ENCODE measurements at regions of chr12 and their contacts with region 1.

Region 1: DNA sequence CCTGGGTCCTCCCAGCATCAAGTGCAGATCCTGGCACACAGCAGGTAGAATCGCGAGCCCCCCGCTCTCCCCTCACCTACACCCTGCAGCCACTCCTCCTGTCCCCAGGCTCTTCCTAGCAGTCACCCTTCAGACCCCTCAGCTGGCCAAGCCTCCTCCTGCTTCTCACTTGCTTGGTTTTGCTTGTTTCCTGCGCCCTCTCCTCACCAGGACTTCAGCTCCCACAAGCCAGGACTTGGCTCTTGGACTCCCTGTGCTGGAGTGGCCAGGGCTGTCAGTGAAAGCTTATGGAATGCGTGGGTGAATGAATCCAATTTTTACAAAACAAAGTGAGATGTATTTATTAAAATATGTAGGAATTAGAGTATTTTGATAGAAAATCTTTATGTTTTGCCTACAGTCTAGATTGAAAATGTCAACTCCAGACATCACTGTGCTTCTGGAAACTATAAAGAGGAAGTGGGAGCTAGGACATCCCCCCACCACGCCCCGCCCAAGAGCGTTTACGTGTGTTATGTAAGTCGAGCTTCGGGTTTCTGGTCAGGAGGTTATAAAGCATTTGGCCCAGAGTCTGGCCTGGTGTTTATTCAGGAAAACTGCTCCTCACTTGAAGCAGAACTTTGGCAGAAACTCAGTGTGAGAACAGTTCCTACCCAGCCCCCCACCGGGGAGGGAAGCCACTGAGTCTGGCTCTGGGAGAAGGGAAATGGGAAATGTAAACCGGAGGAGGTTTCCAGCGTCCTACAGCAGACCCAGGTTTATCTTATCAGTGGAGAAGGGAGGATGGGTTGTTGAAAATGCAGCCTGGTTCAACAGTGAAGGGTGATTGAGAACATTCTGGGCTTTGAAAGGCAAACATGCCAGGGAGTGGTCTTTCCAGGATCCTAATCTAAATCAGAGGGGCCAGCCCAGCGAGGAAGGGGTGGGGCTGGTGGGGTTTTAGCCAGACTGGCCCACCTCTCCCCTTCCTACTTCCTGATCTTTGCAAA is 8.8 kb downstream of the ALDH2 start:
- DNase-seq: no peak
- ATAC-seq: peak; percentile 52
- H3K4me3 ChIP-seq: peak overlapping the region in 1 of 2 experiments; percentile 9; a peak in 2 of 4 replicates
- H3K27ac ChIP-seq: peak overlapping the region; percentile 65
- H3K4me1 ChIP-seq: peaks cover 30% of the 10 kb centered on the region
- H3K27me3 ChIP-seq: no peaks in the 10 kb centered on the region
- CTCF ChIP-seq: no peak

Region 2: GRCh38 chr12:110998165-110998564 is 777.3 kb before region 1 on chr12:
- CTCF ChIA-PET with region 1: no interaction called
- POLR2A ChIA-PET with region 1: interaction called, 11 read pairs
- in situ Hi-C with region 1: no loop called
- intact Hi-C with region 1: no loop called
- DNase-seq: no peak
- ATAC-seq: no peak
- H3K4me3 ChIP-seq: no peak overlapping the region
- H3K27ac ChIP-seq: no peak overlapping the region
- H3K4me1 ChIP-seq: no peaks in the 10 kb centered on the region
- H3K27me3 ChIP-seq: no peaks in the 10 kb centered on the region; the same call in none of the 2 replicates
- CTCF ChIP-seq: no peak